Thyroid gland (tissue), 4 donors: ENCODE measurements at regions of chr19 and their contacts with region 1.

Region 1: GRCh38 chr19:50476224-50476942 is at the starts of genes EMC10 and GARIN5A:
- DNase-seq: peak; percentile 92 to 94
- H3K4me3 ChIP-seq: peak within 1 kb of the TSS; percentile 60 to 92 (median 81)
- H3K27ac ChIP-seq: peak within 1 kb of the TSS; percentile 11 to 75 (median 44)
- H3K4me1 ChIP-seq: peaks cover 10 to 17% of the 10 kb centered on the region in 2 donors
- H3K27me3 ChIP-seq: no peaks in the 10 kb centered on the region
- CTCF ChIP-seq: peak in 1 of 6 experiments; percentile 42
- POLR2A ChIP-seq: peak; percentile 49 to 82
- total RNA-seq, gene EMC10: 139 to 250 (median 214) TPM
- total RNA-seq, gene GARIN5A: 1.4 to 8.1 (median 5.0) TPM

Region 2: DNA sequence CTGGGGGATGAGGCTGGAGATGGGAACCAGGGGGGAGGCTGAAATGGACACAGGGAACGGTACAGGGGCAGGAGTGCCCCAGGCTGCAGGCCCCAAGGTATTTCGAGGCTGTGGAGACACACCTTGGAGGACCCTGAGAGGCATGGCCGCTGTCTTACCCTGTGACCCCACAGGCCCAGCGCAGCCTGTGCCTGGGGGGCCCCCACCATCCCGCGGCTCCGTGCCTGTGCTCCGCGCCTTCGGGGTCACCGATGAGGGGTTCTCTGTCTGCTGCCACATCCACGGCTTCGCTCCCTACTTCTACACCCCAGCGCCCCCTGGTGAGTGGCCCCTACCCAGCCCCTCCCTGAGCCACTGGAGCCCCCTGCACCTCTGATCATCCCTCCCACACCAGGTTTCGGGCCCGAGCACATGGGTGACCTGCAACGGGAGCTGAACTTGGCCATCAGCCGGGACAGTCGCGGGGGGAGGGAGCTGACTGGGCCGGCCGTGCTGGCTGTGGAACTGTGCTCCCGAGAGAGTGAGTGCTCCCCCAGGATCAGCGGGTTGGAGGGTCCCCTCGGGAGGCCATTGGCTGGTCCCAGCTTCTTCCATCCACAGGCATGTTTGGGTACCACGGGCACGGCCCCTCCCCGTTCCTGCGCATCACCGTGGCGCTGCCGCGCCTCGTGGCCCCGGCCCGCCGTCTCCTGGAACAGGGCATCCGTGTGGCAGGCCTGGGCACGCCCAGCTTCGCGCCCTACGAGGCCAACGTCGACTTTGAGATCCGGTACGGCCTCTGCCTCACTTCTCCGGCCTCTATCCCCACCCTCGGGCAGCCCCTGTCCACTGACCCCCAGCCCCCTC is 74.6 kb before region 1 on chr19:
- intact Hi-C with region 1: no loop called
- DNase-seq: no peak
- H3K4me3 ChIP-seq: no peak overlapping the region
- H3K27ac ChIP-seq: no peak overlapping the region
- H3K4me1 ChIP-seq: no peaks in the 10 kb centered on the region
- H3K27me3 ChIP-seq: no peaks in the 10 kb centered on the region
- CTCF ChIP-seq: no peak
- POLR2A ChIP-seq: no peak

Region 3: DNA sequence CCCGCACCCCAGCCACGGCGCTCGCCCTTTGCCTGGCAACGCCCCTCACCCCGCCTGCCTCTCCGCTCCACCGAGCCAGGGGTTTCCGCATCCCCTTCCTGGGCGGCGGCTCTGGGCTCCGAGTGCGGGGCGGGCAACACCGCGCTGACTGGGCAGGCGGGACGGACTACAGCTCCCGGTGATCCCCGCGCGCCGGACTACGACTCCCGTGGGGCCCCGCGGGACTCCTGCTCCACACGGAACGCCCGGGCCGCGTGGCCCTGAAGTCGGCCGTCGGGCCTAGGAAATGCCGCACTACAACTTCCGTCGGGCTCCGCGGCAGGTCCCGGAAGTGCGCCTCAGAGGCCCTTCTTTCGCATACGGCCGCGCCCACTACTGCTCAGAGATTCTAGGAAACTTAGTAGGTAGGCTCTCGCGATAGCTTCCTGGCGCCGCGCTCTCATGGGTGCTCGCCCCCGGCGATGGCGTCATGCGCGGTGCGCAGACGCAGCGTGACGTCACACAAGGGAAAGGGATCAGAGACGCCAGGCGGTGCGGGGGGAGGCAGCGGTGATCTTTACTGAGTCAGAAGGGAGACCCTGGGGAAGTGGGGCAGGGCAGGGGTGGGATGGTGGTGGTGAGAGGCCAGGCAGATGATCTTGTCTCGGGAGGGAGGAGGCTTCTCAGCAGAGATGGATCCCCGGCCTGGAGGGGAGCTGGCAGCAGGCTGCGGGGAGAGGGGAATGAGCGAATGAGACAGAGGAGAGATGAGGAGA is 34.9 kb after region 1 on chr19 and contains the start of gene JOSD2:
- intact Hi-C with region 1: loop called (anchors 5 kb)
- DNase-seq: peak; percentile 98
- H3K4me3 ChIP-seq: peak within 1 kb of the TSS in 2 of 3 donors; percentile 59 to 69
- H3K27ac ChIP-seq: peak within 1 kb of the TSS in 2 of 3 donors; percentile 64 to 69
- H3K4me1 ChIP-seq: peaks cover 6 to 10% of the 10 kb centered on the region in 2 donors
- H3K27me3 ChIP-seq: no peaks in the 10 kb centered on the region
- CTCF ChIP-seq: peak in 1 of 6 experiments; percentile 31
- POLR2A ChIP-seq: peak in 1 of 2 donors; percentile 60
- total RNA-seq, gene JOSD2: 23.9 to 49.5 (median 41.3) TPM

Region 4: DNA sequence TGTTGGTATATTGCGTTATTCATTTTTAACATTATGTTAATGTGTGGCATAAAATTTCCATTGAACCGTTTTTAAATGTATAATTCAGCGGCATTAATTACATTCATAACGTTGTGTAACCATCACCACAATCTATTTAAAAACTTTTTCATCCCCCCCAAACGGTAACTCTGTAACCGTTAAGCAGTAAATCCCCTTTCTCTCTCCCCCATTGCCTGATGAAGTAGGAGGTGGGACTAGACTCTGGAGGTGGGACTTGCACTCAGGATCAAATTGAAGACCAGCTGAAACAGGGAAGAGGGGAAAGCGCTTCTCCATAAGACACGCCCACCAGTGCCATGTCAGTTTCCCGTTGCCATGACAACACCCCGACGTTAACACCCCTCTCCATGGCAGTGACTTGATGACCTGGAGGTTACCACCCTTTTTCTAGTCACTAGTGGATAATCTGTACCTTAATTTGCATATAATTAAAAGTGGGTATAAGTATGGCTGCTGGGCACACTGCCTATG is 263.6 kb after region 1 on chr19:
- intact Hi-C with region 1: no loop called
- DNase-seq: no peak
- H3K4me3 ChIP-seq: no peak overlapping the region
- H3K27ac ChIP-seq: no peak overlapping the region
- H3K4me1 ChIP-seq: no peaks in the 10 kb centered on the region
- H3K27me3 ChIP-seq: no peaks in the 10 kb centered on the region
- CTCF ChIP-seq: no peak
- POLR2A ChIP-seq: no peak